ENCODE measurements at regions of chr11 and their contacts with region 1.

Region 1: GRCh38 chr11:17878743-17879142 is 134.1 kb downstream of the SERGEF start:
- DNase-seq: no peak
- H3K4me3 ChIP-seq: no peak overlapping the region
- H3K27ac ChIP-seq: no peak overlapping the region
- H3K4me1 ChIP-seq: peaks cover 11% of the 10 kb centered on the region
- H3K27me3 ChIP-seq: no peaks in the 10 kb centered on the region
- CTCF ChIP-seq: no peak
- POLR2A ChIP-seq: no peak

Region 2: GRCh38 chr11:17921659-17922415 is 43.1 kb after region 1 on chr11:
- CTCF ChIA-PET with region 1: no interaction called
- POLR2A ChIA-PET with region 1: no interaction called
- dilution Hi-C with region 1: no loop called
- intact Hi-C with region 1: loop called (anchors 1 kb)
- DNase-seq: no peak
- H3K4me3 ChIP-seq: no peak overlapping the region
- H3K27ac ChIP-seq: no peak overlapping the region
- H3K4me1 ChIP-seq: no peaks in the 10 kb centered on the region
- H3K27me3 ChIP-seq: no peaks in the 10 kb centered on the region
- CTCF ChIP-seq: no peak
- POLR2A ChIP-seq: no peak